K562 (cell line): ENCODE measurements at regions of chr12 and their contacts with region 1.

Region 1: DNA sequence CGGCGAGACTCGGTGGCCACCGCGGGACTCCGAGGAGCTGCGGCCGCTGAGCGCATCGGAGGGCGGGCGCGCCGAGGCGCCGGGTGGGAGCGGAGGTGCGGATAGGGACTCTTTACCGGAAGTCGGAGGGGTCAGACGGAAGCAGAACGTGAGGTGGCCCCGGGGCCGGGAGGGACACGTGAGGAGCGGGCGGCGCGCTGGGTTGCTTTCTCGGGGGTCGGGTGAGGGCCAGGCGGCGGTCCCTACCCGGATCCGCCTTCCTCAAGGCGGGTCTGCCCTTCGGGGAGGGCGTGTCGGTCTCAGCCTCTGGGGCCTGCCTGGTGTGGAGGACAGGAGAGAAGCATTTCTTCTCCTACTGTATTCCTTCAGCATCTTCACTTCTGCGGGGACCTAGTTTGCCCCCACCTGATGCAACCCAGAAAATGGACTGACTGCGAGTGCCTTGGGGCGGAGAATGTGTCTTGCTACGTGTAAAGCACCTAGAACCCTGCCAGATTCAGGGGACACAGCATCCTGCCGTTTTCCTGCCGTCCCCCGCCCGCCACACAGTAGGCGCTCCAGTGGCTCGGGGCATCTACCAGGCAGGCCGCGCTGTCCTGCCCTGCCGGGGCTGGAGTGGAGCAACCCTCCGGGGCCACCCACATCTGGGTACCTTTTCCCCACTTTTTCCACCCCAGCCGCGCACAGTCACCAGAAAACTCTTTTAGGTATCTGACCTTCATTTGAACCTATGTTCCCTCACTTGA is 517 bp upstream of the ATXN2 start:
- DNase-seq: peak; percentile 94 to 96 (median 94)
- ATAC-seq: peak; percentile 86
- H3K4me3 ChIP-seq: peak overlapping the region; percentile 96
- H3K27ac ChIP-seq: peak overlapping the region; percentile 99
- H3K4me1 ChIP-seq: peaks cover 0 to 30% of the 10 kb centered on the region in 2 experiments; a peak in 4 of 5 replicates
- H3K27me3 ChIP-seq: no peaks in the 10 kb centered on the region
- CTCF ChIP-seq: 0 out of 6 replicates have a peak, but pooled peaks of 1 of the 3 experiments have one; percentile 0
- EP300 ChIP-seq: peak; percentile 36; the same call in 1 of the 2 replicates
- POLR2A ChIP-seq: peak; percentile 93
- RAD21 ChIP-seq: no peak; a peak in 1 of 4 replicates

Region 2: DNA sequence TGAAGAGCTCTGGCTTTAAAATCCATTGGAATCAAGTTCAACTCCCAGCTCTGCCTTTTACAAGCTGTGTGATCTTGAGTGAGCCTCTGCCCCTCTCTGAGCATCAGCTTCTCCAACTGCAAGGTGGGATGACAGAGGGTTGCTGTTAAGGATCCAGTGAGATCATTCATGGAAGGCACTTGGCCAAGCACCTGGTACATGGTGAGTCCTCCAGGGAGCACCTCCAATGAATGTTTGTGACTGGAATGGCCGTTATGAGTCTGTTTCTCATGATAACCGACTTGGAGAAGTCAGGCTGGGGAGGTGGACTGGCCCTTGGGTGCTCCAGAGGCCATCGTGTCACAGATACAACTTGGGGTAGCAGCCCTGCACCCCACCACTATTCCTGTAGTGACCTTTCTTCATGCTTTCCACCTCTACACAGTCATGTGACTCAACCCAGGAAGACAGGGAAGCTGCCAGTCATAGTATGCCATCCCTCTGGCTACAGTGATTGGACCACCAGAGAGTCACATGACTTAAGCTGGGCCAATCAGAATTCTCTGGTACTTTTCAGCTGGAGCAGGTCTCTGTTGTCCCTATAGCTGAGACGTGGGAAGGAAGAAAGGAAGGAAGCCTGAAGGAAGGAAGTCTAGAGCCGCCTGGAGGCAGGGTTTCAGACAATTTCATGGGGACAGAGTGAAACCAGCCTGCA is 532.7 kb before region 1 on chr12:
- CTCF ChIA-PET with region 1: no interaction called
- POLR2A ChIA-PET with region 1: no interaction called
- in situ Hi-C with region 1: no loop called
- intact Hi-C with region 1: no loop called
- DNase-seq: peak; percentile 28 to 71 (median 64)
- ATAC-seq: peak; percentile 82
- H3K4me3 ChIP-seq: no peak overlapping the region
- H3K27ac ChIP-seq: no peak overlapping the region
- H3K4me1 ChIP-seq: no peaks in the 10 kb centered on the region
- H3K27me3 ChIP-seq: peaks cover 12 to 40% of the 10 kb centered on the region in 2 experiments
- CTCF ChIP-seq: no peak
- EP300 ChIP-seq: no peak
- POLR2A ChIP-seq: no peak
- RAD21 ChIP-seq: no peak

Region 3: DNA sequence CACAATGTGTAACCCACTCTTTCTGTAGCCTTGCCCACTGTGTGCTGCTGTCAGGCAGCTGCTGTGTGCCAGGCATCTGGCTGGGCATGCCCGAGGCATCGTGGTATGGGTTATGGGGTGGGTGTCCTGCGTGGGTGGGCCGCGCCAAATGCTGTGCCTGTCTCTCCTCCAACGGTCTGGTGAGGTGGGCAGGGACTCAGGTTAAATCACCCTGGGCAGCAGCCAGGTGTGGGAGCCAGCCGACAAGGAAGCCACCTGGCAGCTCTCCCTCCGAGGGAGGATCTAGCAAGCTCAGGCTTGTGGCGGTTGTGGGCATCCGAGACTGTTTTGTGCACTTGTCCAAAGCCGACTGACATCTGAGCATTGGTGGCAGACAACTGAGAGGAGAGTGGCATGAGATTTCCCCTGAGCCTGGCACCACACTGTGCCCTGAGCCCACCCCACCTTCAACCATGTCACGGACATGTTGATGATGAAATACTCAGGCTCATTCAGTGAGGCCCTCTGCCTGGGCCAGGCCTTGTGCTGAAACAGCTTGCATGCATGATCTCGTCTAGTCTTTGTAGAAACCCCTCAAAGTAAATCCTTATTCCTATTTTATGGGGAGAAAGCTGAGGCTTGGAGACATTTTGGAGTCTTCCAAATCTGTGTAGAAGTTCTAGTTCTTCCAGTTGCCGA is 497.4 kb before region 1 on chr12:
- CTCF ChIA-PET with region 1: no interaction called
- POLR2A ChIA-PET with region 1: no interaction called
- in situ Hi-C with region 1: no loop called
- intact Hi-C with region 1: no loop called
- DNase-seq: no peak
- ATAC-seq: no peak
- H3K4me3 ChIP-seq: no peak overlapping the region
- H3K27ac ChIP-seq: no peak overlapping the region
- H3K4me1 ChIP-seq: no peaks in the 10 kb centered on the region
- H3K27me3 ChIP-seq: peaks cover 19 to 67% of the 10 kb centered on the region in 2 experiments
- CTCF ChIP-seq: no peak
- EP300 ChIP-seq: no peak
- POLR2A ChIP-seq: no peak
- RAD21 ChIP-seq: no peak

Region 4: GRCh38 chr12:111405149-111405860 is 194.3 kb before region 1 on chr12:
- CTCF ChIA-PET with region 1: no interaction called
- POLR2A ChIA-PET with region 1: no interaction called
- in situ Hi-C with region 1: no loop called
- intact Hi-C with region 1: loop called (anchors 5 kb)
- DNase-seq: peak; percentile 97 to 99 (median 98)
- ATAC-seq: peak; percentile 76
- H3K4me3 ChIP-seq: peak overlapping the region; percentile 93
- H3K27ac ChIP-seq: peak overlapping the region; percentile 97
- H3K4me1 ChIP-seq: peaks cover 50 to 76% of the 10 kb centered on the region in 2 experiments
- H3K27me3 ChIP-seq: no peaks in the 10 kb centered on the region; a peak in 1 of 5 replicates
- CTCF ChIP-seq: peak; percentile 75 to 76 (median 75)
- EP300 ChIP-seq: peak; percentile 94
- POLR2A ChIP-seq: peak; percentile 88
- RAD21 ChIP-seq: peak; percentile 37 to 47; a peak in 3 of 4 replicates

Region 5: GRCh38 chr12:111462210-111462769 is 137.3 kb before region 1 on chr12:
- CTCF ChIA-PET with region 1: no interaction called
- POLR2A ChIA-PET with region 1: no interaction called
- in situ Hi-C with region 1: no loop called
- intact Hi-C with region 1: no loop called
- DNase-seq: no peak
- ATAC-seq: no peak
- H3K4me3 ChIP-seq: no peak overlapping the region
- H3K27ac ChIP-seq: no peak overlapping the region
- H3K4me1 ChIP-seq: no peaks in the 10 kb centered on the region
- H3K27me3 ChIP-seq: no peaks in the 10 kb centered on the region
- CTCF ChIP-seq: no peak
- EP300 ChIP-seq: no peak
- POLR2A ChIP-seq: no peak
- RAD21 ChIP-seq: no peak

Region 6: DNA sequence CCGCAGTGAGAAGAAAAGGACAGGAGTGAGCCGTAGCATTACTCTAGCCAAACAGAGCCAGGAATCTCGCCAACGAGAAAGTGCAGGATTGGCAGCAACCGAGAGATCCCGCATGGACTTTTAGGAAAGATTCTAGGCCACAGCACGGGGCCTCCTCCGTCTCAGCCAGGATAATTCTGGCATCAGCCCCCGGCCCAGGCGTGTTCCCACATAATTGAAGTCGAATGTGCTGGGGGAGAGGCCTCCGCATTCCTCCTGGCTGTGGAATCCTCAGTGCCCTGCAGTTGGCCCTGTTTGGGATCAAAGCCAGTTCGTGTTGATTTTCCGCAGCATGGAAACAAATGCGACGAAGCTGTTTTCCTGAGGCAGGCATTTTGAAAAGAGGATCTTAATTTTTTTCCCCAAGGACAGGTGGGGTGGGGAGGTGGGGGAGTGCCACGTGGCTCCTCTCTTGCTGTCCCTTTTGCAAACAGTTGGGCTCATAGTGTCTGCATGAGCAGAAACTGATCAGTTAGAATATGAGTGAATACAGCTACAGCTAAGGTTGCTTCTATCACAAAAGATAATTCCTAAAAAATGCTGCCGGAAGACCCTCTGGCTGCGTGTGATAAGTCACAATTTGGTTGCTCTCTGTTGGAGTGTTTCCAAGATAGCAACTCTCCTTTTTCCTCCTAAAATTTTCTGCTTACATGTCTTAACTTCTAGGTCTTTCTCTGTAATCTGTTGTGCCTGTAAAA is 36.7 kb after region 1 on chr12:
- CTCF ChIA-PET with region 1: no interaction called
- POLR2A ChIA-PET with region 1: interaction called, 4 read pairs
- in situ Hi-C with region 1: no loop called
- intact Hi-C with region 1: loop called (anchors 1 kb)
- DNase-seq: peak; percentile 66 to 90 (median 74)
- ATAC-seq: peak; percentile 87
- H3K4me3 ChIP-seq: peak overlapping the region; percentile 10; the same call in 1 of the 2 replicates
- H3K27ac ChIP-seq: peak overlapping the region; percentile 94
- H3K4me1 ChIP-seq: peaks cover 35 to 36% of the 10 kb centered on the region in 2 experiments
- H3K27me3 ChIP-seq: no peaks in the 10 kb centered on the region
- CTCF ChIP-seq: no peak
- EP300 ChIP-seq: peak; percentile 88
- POLR2A ChIP-seq: peak; percentile 34; the same call in 1 of the 2 replicates
- RAD21 ChIP-seq: 0 out of 4 replicates have a peak, but pooled peaks of 1 of the 2 experiments have one; percentile 7